Cardiac septum (tissue), 1 donor: ENCODE measurements at regions of chr18 and their contacts with region 1.

Region 1: DNA sequence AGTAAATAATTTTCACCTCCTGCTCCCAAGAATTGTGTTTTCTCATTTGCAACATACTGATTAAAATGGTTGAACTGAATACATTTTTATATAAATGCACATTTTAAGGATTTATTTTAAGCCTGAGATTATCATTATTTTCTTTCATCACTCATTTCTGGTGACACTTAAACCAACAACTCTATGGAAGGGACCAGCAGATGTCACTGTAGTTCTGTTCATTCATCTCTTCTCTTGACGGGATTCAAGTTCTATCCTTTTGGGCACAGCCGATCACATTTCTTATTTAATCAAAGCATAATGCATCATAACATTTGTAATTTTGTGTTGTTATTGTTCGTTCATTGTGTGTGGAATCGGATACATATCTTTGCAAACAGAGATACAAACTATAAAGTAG is 417.9 kb downstream of the HRH4 start:
- DNase-seq: no peak

Region 2: GRCh38 chr18:24923138-24923537 is 44.8 kb after region 1 on chr18:
- intact Hi-C with region 1: no loop called
- DNase-seq: no peak

Region 3: DNA sequence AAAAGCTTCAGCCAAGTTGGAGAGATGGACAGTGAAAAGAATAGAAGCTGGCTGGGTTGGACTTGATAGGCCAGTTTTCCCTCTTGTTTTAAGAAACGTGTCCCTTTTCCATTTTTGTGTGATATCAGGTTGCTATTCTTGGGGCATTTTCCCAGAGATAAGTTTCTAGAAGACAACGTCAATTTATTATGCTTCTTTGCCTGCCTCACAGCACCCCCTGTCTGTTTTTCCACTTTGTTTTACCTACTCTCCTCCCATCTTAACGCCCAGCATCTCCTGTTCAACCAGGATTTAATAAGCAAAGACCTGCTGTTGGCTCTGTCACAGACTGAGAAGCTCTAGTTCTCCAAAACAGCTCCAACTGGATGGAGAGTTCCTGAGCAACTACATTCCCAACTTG is 791.5 kb after region 1 on chr18:
- intact Hi-C with region 1: loop called (anchors 10 kb)
- DNase-seq: no peak

Region 4: GRCh38 chr18:25832001-25832604 is 953.8 kb after region 1 on chr18:
- intact Hi-C with region 1: loop called (anchors 2 kb)
- DNase-seq: no peak